Activated CD8-positive, alpha-beta memory T cell treated with anti-CD3 and anti-CD28 coated beads, Interleukin-2, amount 10 ng/mL, durations not matched to agents 7 days and 5 days (primary cell): ENCODE measurements at regions of chr1 and their contacts with region 1.

Region 1: GRCh38 chr1:12434174-12434573 is 183.8 kb downstream of the DHRS3 start:
- DNase-seq: peak; percentile 89
- ATAC-seq: peak; percentile 37
- H3K4me3 Mint-ChIP-seq: peak overlapping the region; percentile 34
- H3K27ac Mint-ChIP-seq: peak overlapping the region; percentile 88
- H3K4me1 Mint-ChIP-seq: peaks cover 63% of the 10 kb centered on the region
- H3K27me3 Mint-ChIP-seq: no peaks in the 10 kb centered on the region

Region 2: GRCh38 chr1:12397462-12398450 is 36.4 kb before region 1 on chr1:
- CTCF ChIA-PET with region 1: no interaction called
- DNase-seq: no peak
- ATAC-seq: peak; percentile 39
- H3K4me3 Mint-ChIP-seq: no peak overlapping the region
- H3K27ac Mint-ChIP-seq: peak overlapping the region; percentile 5
- H3K4me1 Mint-ChIP-seq: peaks cover 15% of the 10 kb centered on the region
- H3K27me3 Mint-ChIP-seq: no peaks in the 10 kb centered on the region

Region 3: DNA sequence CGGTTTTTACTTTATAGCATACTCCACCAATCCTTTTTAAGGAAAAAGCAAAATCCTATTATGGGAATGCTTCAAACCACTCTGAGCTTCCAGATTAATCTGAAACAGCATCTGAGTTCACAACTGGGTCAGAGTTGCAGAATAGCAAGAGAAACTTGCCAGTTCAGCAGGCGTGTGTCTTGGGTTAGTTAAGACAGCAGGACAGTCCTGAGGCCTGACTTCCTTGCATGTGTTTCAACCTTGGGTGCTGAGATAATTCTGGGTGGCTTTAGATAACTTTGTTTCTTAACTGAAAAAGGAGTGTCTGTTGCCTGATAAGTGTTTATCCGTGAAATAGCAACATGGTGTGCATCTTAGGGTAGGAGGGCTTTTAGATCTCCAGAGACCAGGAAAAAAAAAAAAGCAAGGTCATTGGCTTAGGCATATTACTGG is 14.6 kb after region 1 on chr1:
- CTCF ChIA-PET with region 1: interaction called, 15 read pairs
- DNase-seq: no peak
- ATAC-seq: no peak
- H3K4me3 Mint-ChIP-seq: no peak overlapping the region
- H3K27ac Mint-ChIP-seq: peak overlapping the region; percentile 88
- H3K4me1 Mint-ChIP-seq: peaks cover 49% of the 10 kb centered on the region
- H3K27me3 Mint-ChIP-seq: peaks cover 46% of the 10 kb centered on the region

Region 4: GRCh38 chr1:12477936-12478611 is 43.9 kb after region 1 on chr1:
- CTCF ChIA-PET with region 1: interaction called, 24 read pairs
- DNase-seq: no peak
- ATAC-seq: peak; percentile 17
- H3K4me3 Mint-ChIP-seq: peak overlapping the region; percentile 5
- H3K27ac Mint-ChIP-seq: peak overlapping the region; percentile 82
- H3K4me1 Mint-ChIP-seq: peaks cover 83% of the 10 kb centered on the region
- H3K27me3 Mint-ChIP-seq: no peaks in the 10 kb centered on the region